MCF 10A (cell line): ENCODE measurements at regions of chr4 and their contacts with region 1.

Region 1: GRCh38 chr4:182207830-182208396 is 35.3 kb upstream of the TENM3 start:
- DNase-seq: peak; percentile 87
- H3K4me3 Mint-ChIP-seq: peak overlapping the region; percentile 51
- H3K27ac Mint-ChIP-seq: peak overlapping the region; percentile 96
- H3K4me1 Mint-ChIP-seq: peaks cover 40% of the 10 kb centered on the region
- H3K27me3 Mint-ChIP-seq: no peaks in the 10 kb centered on the region
- CTCF ChIP-seq: no peak

Region 2: DNA sequence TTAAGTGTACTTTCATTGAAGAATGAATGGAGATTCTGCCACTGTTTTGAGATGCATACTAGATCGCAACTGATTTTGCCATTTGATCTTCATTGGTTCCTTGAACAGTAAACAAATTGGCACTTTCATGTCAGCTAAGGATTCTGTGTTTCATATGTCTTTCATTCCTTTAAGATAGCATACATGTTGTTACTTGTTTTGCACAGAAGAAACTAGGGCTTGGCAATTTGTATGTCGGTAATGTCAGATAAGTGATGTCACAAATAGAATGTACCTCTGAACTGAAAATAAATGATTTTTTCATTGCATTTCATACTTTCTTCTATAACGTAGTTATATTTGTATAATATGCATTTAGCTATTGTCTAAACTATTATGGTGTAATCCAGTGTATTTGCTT is 37.9 kb before region 1 on chr4:
- CTCF ChIA-PET with region 1: interaction called, 3 read pairs
- POLR2A ChIA-PET with region 1: interaction called, 10 read pairs
- intact Hi-C with region 1: no loop called
- DNase-seq: no peak
- H3K4me3 Mint-ChIP-seq: no peak overlapping the region
- H3K27ac Mint-ChIP-seq: no peak overlapping the region
- H3K4me1 Mint-ChIP-seq: no peaks in the 10 kb centered on the region
- H3K27me3 Mint-ChIP-seq: no peaks in the 10 kb centered on the region
- CTCF ChIP-seq: no peak

Region 3: GRCh38 chr4:182179105-182179504 is 28.8 kb before region 1 on chr4:
- CTCF ChIA-PET with region 1: no interaction called
- POLR2A ChIA-PET with region 1: interaction called, 10 read pairs
- intact Hi-C with region 1: no loop called
- DNase-seq: peak; percentile 66
- H3K4me3 Mint-ChIP-seq: no peak overlapping the region
- H3K27ac Mint-ChIP-seq: peak overlapping the region; percentile 51
- H3K4me1 Mint-ChIP-seq: no peaks in the 10 kb centered on the region
- H3K27me3 Mint-ChIP-seq: no peaks in the 10 kb centered on the region
- CTCF ChIP-seq: no peak

Region 4: DNA sequence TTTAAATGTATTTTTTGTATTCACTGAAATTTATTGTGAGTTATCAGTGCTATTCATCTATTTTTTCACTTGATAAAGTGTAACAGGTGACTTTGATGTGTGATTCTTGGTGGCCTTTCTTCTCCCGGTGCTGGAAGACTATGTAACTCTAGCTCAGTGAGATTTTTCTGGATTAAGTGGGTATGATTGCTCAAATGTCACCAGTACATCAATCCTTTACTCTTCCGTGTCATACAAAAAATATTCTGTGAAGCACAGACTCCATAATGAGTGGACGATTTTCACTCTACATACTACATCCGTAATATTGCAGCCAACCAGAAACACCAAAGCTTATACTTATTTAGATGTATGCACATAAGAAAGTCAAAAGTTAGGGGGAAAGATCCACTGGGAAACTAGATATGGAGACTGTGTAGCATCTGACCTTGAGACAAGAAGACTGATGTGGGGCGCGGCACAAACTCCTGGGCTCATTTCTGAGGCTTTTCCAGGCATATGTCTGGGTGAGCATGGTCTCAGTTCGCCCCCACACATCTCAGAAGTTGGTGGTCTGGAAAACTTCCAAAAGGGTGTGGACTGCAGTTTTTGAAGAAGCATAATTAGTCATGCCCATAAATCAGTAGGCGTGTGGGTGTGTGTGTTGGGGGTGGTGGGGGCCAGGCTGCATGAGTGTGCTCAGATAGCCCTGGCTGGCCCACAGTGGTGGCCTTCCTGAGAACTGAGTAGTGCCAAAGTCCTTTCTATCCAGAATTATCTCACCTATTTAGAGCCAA is 18.6 kb before region 1 on chr4:
- CTCF ChIA-PET with region 1: interaction called, 3 read pairs
- POLR2A ChIA-PET with region 1: interaction called, 26 read pairs
- intact Hi-C with region 1: no loop called
- DNase-seq: peak; percentile 94
- H3K4me3 Mint-ChIP-seq: no peak overlapping the region
- H3K27ac Mint-ChIP-seq: peak overlapping the region; percentile 31
- H3K4me1 Mint-ChIP-seq: peaks cover 29% of the 10 kb centered on the region
- H3K27me3 Mint-ChIP-seq: no peaks in the 10 kb centered on the region
- CTCF ChIP-seq: no peak

Region 5: GRCh38 chr4:182197615-182198014 is 10.3 kb before region 1 on chr4:
- CTCF ChIA-PET with region 1: interaction called, 3 read pairs
- POLR2A ChIA-PET with region 1: interaction called, 26 read pairs
- intact Hi-C with region 1: no loop called
- DNase-seq: no peak
- H3K4me3 Mint-ChIP-seq: no peak overlapping the region
- H3K27ac Mint-ChIP-seq: no peak overlapping the region
- H3K4me1 Mint-ChIP-seq: peaks cover 9% of the 10 kb centered on the region
- H3K27me3 Mint-ChIP-seq: no peaks in the 10 kb centered on the region
- CTCF ChIP-seq: no peak

Region 6: DNA sequence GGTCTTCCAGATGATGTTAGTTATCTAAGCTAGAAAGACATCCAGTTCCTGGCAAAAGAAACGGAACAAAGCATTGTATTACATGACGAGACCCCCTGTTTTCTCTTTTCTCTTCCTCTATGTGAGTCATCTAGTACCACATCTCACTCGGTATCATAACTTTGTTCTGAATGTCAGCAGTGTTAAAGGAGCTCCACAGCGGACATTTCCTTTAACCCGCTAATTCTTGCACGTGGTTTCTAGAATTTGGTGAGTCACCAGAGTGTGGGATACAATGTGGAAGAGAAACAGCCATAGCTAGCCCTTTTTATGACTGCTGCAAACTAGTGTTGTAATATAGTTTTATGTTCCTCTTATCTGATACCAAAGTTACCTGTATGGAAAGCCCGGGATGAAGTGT is 279.0 kb after region 1 on chr4:
- CTCF ChIA-PET with region 1: no interaction called
- POLR2A ChIA-PET with region 1: no interaction called
- intact Hi-C with region 1: no loop called
- DNase-seq: peak; percentile 2
- H3K4me3 Mint-ChIP-seq: no peak overlapping the region
- H3K27ac Mint-ChIP-seq: no peak overlapping the region
- H3K4me1 Mint-ChIP-seq: peaks cover 5% of the 10 kb centered on the region
- H3K27me3 Mint-ChIP-seq: no peaks in the 10 kb centered on the region
- CTCF ChIP-seq: no peak